Testis (tissue), 5 donors: ENCODE measurements at regions of chr7 and their contacts with region 1.

Region 1: GRCh38 chr7:18570890-18571478 is 75.4 kb downstream of the HDAC9 start:
- DNase-seq: peak; percentile 27
- H3K4me3 ChIP-seq: no peak overlapping the region
- H3K27ac ChIP-seq: no peak overlapping the region
- H3K4me1 ChIP-seq: no peaks in the 10 kb centered on the region
- H3K27me3 ChIP-seq: no peaks in the 10 kb centered on the region
- CTCF ChIP-seq: peak in 2 of 3 experiments; percentile 31 to 38
- POLR2A ChIP-seq: no peak

Region 2: GRCh38 chr7:18352339-18353255 is 218.4 kb before region 1 on chr7:
- intact Hi-C with region 1: loop called (anchors 10 kb)
- DNase-seq: peak; percentile 54
- H3K4me3 ChIP-seq: no peak overlapping the region
- H3K27ac ChIP-seq: no peak overlapping the region
- H3K4me1 ChIP-seq: no peaks in the 10 kb centered on the region
- H3K27me3 ChIP-seq: no peaks in the 10 kb centered on the region
- CTCF ChIP-seq: peak in 2 of 3 experiments; percentile 55 to 56
- POLR2A ChIP-seq: no peak